Activated CD4-positive, alpha-beta T cell treated with anti-CD3 and anti-CD28 coated beads for 36 hours (primary cell): ENCODE measurements at regions of chr15 and their contacts with region 1.

Region 1: DNA sequence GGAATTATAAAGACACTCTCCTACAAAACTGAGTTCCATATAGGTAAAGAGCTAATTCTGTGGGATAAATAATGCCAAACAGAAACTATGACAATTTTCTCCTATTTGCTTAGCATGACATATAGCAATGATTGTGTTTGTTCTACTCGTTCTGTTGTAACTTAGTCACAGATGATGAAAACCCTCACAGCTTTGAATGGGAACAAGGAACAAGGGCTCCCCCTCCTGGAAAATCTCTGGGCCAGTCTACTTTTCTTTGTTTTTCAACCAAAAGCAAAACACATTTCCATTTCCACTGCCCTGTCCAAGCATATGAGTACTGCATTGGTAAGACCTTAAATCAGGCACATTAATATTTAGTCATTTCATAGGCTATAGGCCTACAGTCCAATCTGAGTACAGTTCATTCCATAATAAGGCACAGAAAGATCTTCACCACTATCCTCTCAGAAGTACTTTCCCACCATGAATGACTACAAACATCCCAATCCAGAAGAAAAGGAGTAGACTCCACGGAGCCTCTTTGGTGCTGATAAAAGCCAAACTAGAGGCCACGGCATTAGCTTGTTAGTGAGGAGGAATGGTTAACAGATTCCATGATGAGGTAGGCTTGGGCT is 67.1 kb downstream of the ATP8B4 start:
- DNase-seq: peak; percentile 58
- ATAC-seq: peak; percentile 74
- H3K4me3 Mint-ChIP-seq: no peak overlapping the region
- H3K27ac Mint-ChIP-seq: no peak overlapping the region
- H3K4me1 Mint-ChIP-seq: peaks cover 10% of the 10 kb centered on the region
- H3K27me3 Mint-ChIP-seq: peaks cover 11% of the 10 kb centered on the region

Region 2: DNA sequence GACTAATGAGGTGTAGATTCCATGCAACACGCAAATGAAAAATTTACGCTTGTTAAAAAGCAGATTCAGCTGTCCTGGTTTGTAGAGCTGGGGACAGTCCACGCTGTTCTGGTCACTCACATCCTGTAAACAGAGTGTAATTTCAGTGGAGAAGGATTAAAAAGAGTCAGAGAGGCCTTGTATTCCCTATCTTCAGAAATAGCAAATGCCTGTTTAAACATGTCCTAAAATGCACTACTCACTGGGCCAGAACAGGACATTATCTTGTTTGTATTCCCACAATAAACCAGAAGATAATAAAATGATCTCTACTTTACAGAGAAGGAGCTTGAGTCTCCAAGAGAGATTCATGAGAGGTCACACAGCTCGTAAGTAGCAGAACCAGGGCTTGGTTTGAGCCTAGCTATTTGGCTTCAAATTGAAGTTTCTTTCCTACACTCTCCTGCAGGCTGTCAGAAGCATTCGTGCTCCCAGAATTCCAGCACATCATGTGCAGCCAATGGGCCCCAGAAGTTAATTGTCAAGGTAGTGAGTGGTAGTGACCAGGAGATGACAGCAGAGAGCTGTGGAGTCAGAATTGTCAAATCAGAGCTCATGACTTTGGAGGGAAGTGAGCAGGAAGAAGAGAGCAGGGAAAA is 175.4 kb before region 1 on chr15:
- CTCF ChIA-PET with region 1: interaction called, 3 read pairs
- POLR2A ChIA-PET with region 1: no interaction called
- intact Hi-C with region 1: loop called in 1 of 2 experiments (anchors 5 kb)
- DNase-seq: no peak
- ATAC-seq: no peak
- H3K4me3 Mint-ChIP-seq: no peak overlapping the region
- H3K27ac Mint-ChIP-seq: no peak overlapping the region
- H3K4me1 Mint-ChIP-seq: no peaks in the 10 kb centered on the region
- H3K27me3 Mint-ChIP-seq: peaks cover 2% of the 10 kb centered on the region